ENCODE measurements at regions of chr1 and their contacts with region 1.

Region 1: DNA sequence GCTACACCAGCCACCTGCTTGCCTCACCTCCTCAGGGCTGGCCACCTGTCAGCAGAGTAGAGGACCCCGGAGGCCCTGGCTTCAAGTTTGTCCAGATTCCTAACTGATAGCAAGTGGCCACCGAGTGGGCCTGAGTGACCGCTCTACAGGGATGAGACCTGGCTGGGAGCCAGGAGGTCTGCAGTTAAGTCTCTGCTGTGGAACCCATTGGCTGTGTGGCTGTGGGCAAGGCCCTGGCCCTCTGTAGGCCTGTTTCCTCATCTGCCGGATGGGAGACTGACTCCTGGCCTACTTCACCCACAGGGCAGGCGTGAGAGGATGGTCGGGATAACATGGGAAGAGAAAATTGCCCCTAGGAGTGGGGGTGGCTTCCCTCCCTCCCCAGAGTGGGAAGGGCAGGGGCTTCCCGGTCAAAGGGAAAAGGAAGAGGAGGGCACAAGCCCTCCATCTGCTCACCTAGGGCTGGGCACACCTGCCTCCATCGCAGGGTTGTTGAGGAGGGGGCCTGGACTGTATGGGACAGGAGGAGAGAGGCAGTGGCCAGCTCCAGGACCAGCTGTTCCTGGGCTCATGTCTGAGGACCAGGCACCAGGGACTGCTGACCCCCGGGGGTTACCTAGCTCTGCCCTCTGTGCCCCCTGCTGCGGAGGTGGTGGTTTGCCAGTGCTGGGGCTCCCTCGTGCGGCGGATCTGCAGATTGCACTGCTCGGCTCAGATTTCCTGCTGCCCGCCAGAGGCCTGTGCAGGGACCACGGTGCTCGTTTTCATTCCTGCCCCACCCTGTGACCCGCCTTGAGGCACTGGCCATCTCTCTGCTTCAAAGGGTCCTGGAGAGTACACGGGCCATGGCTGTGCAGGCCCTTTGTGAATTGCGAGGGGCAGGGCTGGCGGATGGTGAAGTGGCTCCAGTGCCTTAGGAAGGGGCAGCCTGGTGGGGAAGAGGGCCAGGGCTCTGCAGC is 9.1 kb upstream of the MTFR1L start:
- DNase-seq: peak; percentile 66 to 84 (median 80)
- H3K4me3 ChIP-seq: no peak overlapping the region
- H3K27ac ChIP-seq: no peak overlapping the region
- H3K4me1 ChIP-seq: no peaks in the 10 kb centered on the region
- H3K27me3 ChIP-seq: no peaks in the 10 kb centered on the region
- CTCF ChIP-seq: peak; percentile 89 to 95 (median 93)
- EP300 ChIP-seq: no peak
- POLR2A ChIP-seq: no peak

Region 2: DNA sequence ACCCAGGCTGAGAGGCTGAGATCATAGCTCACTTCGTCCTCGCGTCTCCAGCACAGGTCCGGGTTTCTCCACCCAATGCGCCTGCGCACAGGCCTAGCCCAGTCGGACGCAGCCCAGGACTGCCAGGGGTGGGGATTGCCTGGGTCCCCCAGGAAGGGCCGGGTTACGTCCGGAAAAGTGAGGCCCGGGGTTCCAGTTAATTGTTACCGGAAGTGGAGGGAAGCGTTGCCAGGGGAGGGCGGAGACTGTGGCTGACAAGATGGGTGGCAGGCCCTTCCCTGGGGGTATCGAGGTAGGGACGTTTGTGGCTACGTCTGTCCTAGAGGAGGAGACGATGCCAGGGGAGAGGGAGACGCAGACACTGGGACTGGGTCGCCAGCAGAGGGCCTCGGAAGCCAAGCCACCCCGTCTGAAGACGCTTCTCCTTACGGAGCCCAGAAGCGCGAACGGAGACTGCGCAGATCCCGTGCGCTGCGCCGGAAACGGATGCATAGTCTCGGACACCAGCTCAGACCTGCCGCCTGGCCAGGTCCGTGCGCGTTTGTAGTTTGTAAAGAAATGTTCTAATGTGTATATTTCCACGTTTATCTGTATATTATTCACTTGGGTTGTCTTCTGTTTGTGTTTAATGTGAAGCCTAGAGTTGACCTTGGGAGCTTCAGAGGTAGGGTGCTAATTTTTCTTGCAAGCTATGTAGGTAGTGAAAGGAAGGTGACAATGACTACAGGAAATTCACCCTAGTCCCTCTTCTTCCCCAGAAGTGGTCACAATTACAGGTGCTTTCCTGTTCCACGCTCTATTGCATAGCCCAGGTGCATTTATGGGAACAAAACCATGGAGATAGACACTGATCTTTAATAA is 570.7 kb before region 1 on chr1:
- intact Hi-C with region 1: loop called in 1 of 4 experiments (anchors 5 kb)
- DNase-seq: peak; percentile 88 to 92 (median 91)
- H3K4me3 ChIP-seq: peak overlapping the region; percentile 41
- H3K27ac ChIP-seq: peak overlapping the region; percentile 91 to 93
- H3K4me1 ChIP-seq: no peaks in the 10 kb centered on the region
- H3K27me3 ChIP-seq: no peaks in the 10 kb centered on the region
- CTCF ChIP-seq: peak; percentile 49 to 86 (median 79)
- EP300 ChIP-seq: no peak
- POLR2A ChIP-seq: no peak

Region 3: DNA sequence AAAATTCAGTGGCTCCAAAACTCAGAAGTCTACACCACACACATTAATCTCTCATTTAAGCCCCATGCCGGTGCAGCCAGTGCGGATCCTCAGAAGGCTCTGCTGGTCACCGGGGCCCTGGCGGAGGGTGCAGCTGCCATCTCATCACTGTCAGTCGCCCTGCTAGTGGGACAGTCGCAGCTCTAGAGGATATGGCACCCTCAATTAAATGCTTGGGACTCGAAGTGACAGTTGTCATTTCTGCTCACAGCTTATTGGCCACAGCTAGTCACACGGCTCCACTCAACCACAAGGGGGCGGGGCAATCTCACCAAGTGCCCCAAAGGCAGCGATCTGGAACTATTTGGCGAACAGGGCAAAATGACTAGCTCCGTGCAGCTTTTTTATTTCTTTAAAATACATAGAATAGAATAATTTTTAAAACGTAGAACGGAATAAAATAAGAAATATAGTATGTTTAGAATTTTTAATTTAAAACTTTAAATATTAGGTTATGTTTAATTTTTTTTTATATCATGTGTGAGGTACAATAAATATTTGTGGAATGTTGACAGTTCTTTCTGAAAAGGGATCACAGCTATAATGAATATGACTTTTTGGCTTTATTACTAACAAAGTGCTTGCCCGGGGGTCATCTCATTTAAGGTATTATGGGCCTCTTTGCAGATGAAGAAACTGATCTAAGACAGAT is 202.0 kb before region 1 on chr1:
- intact Hi-C with region 1: loop called in 1 of 4 experiments (anchors 5 kb)
- DNase-seq: peak; percentile 77 to 90 (median 88)
- H3K4me3 ChIP-seq: no peak overlapping the region
- H3K27ac ChIP-seq: no peak overlapping the region
- H3K4me1 ChIP-seq: no peaks in the 10 kb centered on the region
- H3K27me3 ChIP-seq: no peaks in the 10 kb centered on the region
- CTCF ChIP-seq: peak; percentile 74 to 96 (median 88)
- EP300 ChIP-seq: no peak
- POLR2A ChIP-seq: no peak

Measured in ovary (tissue), 10 donors.